ENCODE measurements at regions of chr21 and their contacts with region 1.

Region 1: DNA sequence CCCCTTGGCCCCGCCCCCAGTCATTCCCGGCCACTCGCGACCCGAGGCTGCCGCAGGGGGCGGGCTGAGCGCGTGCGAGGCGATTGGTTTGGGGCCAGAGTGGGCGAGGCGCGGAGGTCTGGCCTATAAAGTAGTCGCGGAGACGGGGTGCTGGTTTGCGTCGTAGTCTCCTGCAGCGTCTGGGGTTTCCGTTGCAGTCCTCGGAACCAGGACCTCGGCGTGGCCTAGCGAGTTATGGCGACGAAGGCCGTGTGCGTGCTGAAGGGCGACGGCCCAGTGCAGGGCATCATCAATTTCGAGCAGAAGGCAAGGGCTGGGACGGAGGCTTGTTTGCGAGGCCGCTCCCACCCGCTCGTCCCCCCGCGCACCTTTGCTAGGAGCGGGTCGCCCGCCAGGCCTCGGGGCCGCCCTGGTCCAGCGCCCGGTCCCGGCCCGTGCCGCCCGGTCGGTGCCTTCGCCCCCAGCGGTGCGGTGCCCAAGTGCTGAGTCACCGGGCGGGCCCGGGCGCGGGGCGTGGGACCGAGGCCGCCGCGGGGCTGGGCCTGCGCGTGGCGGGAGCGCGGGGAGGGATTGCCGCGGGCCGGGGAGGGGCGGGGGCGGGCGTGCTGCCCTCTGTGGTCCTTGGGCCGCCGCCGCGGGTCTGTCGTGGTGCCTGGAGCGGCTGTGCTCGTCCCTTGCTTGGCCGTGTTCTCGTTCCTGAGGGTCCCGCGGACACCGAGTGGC is at the start of gene SOD1:
- DNase-seq: peak; percentile 92 to 95
- H3K4me3 ChIP-seq: peak within 1 kb of the TSS; percentile 56 to 91
- H3K27ac ChIP-seq: peak within 1 kb of the TSS; percentile 82 to 88
- H3K4me1 ChIP-seq: peaks cover 11 to 14% of the 10 kb centered on the region in 2 donors
- H3K27me3 ChIP-seq: no peaks in the 10 kb centered on the region
- CTCF ChIP-seq: peak in 2 of 4 experiments; percentile 13 to 34
- POLR2A ChIP-seq: peak; percentile 79 to 84
- total RNA-seq, gene SOD1: 87.6 to 156 (median 140) TPM

Region 2: GRCh38 chr21:32392880-32393676 is 733.4 kb after region 1 on chr21 and contains the start of gene URB1:
- intact Hi-C with region 1: loop called (anchors 10 kb)
- DNase-seq: peak; percentile 91 to 96
- H3K4me3 ChIP-seq: peak within 1 kb of the TSS; percentile 82 to 96
- H3K27ac ChIP-seq: peak within 1 kb of the TSS; percentile 75 to 81
- H3K4me1 ChIP-seq: peaks cover 3% of the 10 kb centered on the region in 2 donors
- H3K27me3 ChIP-seq: no peaks in the 10 kb centered on the region
- CTCF ChIP-seq: no peak
- POLR2A ChIP-seq: peak; percentile 77 to 84
- total RNA-seq, gene URB1: 11.8 to 31.0 (median 26.0) TPM